ENCODE measurements at regions of chr5 and their contacts with region 1.

Region 1: DNA sequence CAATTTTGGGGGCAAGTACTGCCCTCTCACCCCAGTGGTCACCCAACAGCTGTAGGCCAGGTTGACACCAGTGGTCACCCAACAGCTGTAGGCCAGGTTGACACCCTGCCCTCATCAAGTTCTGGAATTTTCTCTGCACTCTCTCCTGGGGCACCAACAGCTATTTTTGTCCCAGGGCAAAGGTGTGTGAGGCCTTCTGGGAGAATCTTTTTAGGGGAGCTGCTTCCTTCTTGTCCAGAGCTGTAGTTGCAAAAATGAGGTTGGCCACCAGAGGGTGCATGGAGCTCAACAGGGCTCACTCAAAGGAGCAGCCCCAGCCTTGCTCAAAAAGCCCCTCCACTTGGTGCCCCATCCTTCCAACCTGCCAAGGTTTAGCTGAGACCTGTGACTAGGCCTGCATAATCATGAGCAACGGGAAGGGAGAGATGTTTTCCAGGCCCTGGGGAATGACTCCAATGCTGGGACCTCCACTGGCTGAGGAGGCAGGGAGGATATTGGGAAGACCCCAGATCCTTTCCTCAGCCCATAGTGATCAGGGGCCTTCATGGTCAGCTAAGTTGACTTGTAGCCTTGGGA is 10.6 kb upstream of the P4HA2 start:
- DNase-seq: no peak
- H3K4me3 ChIP-seq: no peak overlapping the region
- CTCF ChIP-seq: peak; percentile 85

Region 2: DNA sequence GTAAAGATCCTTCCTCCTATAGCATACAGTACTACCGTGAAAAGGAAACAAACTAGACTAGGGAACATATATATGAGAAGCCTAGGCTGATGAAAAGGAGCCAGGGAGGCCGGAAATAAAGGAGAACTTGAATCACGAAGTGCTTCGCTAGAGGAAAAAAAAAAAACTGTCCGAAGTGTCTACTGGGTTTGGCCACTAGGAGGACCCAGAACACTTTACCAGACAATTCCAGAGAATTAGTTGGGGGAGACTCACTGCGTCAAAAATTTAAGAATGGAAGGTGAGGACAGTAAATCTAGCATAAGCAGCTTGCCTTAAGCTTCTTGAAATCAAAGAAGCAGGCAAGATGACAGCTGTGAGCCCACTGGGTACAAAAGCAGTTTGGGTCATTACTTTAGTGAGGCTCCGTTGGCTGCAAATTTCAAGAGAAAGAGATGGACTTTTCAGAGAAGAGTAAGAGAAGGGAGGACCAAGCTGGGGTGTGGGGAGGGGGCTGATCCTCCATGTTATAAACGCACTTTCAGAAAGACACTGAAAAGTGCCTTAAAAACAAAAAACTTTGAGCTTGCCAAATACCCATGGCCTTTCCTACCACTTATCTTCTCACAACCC is 58.0 kb before region 1 on chr5:
- CTCF ChIA-PET with region 1: interaction called, 23 read pairs
- POLR2A ChIA-PET with region 1: no interaction called
- DNase-seq: peak; percentile 19
- H3K4me3 ChIP-seq: no peak overlapping the region
- CTCF ChIP-seq: peak; percentile 61

Region 3: GRCh38 chr5:132215329-132215728 is 22.9 kb before region 1 on chr5:
- CTCF ChIA-PET with region 1: interaction called, 27 read pairs
- POLR2A ChIA-PET with region 1: interaction called, 4 read pairs
- DNase-seq: peak; percentile 80
- H3K4me3 ChIP-seq: no peak overlapping the region
- CTCF ChIP-seq: no peak

Region 4: GRCh38 chr5:132272311-132273210 is 34.3 kb after region 1 on chr5:
- CTCF ChIA-PET with region 1: interaction called, 36 read pairs
- POLR2A ChIA-PET with region 1: no interaction called
- DNase-seq: no peak
- H3K4me3 ChIP-seq: no peak overlapping the region
- CTCF ChIP-seq: peak; percentile 65

Region 5: DNA sequence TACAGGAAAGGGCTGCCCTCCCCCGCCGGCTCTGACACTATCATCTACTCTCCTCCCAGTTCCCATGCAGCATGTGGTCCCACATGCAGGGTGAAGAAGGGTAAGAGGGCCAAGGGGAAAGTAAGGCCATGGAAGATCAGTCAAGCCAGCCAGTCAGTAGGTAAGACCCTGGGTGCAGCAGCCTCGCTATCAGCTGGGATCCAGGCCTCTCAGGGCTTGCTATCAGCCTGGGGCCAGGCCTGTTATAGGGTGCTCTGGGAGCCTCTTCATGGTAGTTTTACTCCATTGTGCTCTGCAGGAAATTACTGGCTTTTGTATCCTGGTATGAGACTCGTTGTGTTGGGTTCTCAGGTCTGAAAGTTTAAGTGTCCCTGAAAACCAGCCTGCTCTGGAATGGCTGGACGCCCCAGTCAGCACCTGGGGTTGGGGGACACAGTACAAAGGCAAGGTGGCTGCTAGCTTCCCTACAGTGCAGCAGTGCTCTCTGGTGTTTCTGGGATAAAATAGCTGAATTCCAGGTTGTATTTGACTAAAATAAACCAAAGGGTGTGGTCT is 77.3 kb after region 1 on chr5:
- CTCF ChIA-PET with region 1: interaction called, 14 read pairs
- POLR2A ChIA-PET with region 1: no interaction called
- DNase-seq: no peak
- H3K4me3 ChIP-seq: no peak overlapping the region
- CTCF ChIP-seq: no peak

Region 6: DNA sequence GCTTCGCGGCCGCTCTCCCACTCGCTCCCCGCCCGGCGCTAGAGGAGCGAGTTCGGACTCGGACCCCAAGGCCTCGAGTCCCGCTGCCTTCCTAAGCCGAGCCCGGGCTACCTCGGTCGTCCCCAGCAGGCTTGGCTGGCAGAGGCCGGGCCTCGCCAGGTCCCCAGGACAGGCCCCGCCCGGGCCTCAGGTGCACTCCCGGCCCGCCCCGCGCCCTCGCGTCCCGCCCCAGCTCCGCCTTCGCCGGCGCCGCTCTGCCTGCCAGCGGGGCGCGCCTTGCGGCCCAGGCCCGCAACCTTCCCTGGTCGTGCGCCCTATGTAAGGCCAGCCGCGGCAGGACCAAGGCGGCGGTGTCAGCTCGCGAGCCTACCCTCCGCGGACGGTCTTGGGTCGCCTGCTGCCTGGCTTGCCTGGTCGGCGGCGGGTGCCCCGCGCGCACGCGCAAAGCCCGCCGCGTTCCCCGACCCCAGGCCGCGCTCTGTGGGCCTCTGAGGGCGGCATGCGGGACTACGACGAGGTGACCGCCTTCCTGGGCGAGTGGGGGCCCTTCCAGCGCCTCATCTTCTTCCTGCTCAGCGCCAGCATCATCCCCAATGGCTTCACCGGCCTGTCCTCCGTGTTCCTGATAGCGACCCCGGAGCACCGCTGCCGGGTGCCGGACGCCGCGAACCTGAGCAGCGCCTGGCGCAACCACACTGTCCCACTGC is 131.4 kb after region 1 on chr5 and contains the start of gene SLC22A5:
- CTCF ChIA-PET with region 1: interaction called, 17 read pairs
- POLR2A ChIA-PET with region 1: no interaction called
- DNase-seq: no peak
- H3K4me3 ChIP-seq: peak within 1 kb of the TSS; percentile 64
- CTCF ChIP-seq: no peak